PC-9 (cell line): ENCODE measurements at regions of chr11 and their contacts with region 1.

Region 1: DNA sequence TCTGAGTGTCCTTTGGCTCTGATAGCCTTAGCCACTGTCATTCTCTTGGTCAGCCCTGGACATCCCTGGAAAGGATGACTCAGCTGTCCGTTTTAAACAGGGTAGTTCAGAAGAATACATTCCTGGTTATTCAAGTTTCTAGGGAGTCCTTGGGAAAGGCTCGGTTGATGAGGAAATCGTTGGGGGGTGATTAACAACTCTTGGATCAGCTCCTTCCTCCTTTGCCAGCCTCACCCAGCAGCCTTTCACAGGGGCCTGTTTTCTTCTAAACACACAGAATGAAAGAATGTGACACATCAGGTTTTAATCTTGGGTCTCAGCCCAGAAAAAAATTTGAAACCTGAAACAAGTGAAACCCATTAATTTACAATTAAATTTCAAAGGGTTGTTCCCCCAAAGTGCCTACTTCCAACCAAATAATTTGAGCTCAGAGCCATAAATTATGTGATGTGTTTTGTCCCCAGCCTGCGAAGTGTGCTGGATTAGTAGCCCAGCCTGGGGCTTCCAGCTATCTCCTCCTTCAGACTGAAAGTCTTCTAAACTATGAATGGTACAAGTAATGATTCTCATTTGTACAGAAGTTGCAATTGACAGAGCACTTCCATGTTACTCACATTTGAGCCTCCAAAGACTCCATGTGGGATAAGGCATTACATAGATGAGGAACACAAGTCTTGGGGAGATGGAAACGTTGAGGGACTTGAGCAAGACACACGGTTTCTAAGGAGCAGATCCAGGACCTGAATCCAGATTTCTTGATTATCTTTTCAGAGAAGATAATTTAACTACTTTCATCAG is 19.3 kb upstream of the MRGPRX2 start:
- DNase-seq: peak; percentile 86 to 100
- H3K4me3 ChIP-seq: peak overlapping the region; percentile 41
- H3K27ac ChIP-seq: peak overlapping the region; percentile 100
- H3K4me1 ChIP-seq: peaks cover 53% of the 10 kb centered on the region
- H3K27me3 ChIP-seq: no peaks in the 10 kb centered on the region
- CTCF ChIP-seq: 0 out of 2 replicates have a peak, but pooled peaks have one; percentile 27

Region 2: DNA sequence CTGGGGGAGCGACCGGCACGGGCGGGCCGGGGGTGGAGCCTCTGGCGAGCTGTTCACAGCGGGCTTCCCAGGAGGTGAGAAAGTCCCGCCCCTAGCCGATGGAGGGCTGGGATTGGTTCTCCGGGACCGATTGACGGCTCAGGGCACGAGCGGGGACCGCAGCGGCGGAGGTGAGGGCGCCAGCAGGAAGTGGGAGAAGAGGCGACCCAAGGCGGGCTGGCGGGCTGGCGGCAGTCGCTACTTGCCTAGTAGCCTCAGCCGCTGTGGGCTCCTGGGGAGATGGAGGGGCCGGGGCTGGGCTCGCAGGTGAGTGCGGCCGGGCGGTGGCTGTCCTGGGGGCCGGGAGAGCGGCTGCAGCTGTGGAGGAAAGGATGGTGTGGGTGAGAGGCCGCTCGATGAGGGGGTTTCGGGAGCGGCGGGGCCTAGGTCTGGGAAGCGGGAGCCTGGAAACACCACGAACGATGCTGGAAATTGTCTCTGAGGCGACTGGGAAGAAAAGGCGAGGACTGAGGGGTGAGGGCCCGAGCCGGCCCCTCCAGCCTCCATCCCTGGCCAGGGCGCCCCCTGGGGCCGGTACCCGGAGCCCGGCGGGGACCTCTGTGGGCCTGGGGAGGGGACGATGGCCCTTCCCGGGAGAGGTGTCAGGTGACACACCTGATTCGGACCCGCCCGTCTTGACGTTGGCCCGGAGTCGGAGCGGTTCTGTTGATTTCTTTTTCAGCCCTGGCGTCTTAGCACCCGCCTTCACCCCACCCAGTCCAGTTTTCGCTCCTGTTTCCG is 37.3 kb after region 1 on chr11 and contains the start of gene ZDHHC13:
- CTCF ChIA-PET with region 1: interaction called, 5 read pairs
- POLR2A ChIA-PET with region 1: interaction called, 4 read pairs
- intact Hi-C with region 1: loop called (anchors 1 kb)
- DNase-seq: peak; percentile 91 to 99
- H3K4me3 ChIP-seq: peak within 1 kb of the TSS; percentile 87
- H3K27ac ChIP-seq: peak within 1 kb of the TSS; percentile 86
- H3K4me1 ChIP-seq: peaks cover 37% of the 10 kb centered on the region
- H3K27me3 ChIP-seq: no peaks in the 10 kb centered on the region
- CTCF ChIP-seq: peak; percentile 67; the same call in 1 of the 2 replicates
- total RNA-seq, gene ZDHHC13: 31.5 and 35.5 TPM in 2 replicates

Region 3: DNA sequence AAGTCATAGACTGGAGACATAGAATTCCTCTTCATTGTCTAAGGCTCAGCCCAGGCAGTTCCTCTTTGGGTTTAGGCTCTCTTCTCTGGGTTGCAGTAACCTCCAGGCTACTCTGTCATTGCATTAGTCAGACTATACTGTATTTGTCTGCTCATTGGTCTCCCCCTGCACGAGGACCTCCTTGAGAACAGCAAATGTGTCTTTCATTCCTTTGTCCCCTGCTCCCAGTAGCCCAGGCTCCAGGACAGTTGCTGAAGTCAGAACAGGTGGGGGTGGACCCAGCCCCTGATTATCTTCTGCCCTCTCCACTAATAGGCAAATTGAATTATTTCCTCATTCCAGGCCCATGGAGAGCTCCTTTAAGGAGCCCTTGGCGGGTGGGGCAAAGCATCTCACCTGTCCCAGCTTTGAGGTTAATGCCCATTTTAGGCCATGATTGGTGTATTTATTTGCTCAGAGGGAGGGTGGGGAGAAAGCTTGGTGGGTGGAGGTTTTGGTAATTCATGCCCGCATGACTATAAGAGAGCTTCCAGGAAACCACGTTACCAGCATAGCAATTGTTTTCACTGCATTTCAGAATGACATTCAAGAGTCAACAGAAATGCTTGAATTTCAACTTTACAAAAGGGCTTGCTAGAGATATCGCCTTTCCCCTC is 673.7 kb after region 1 on chr11:
- CTCF ChIA-PET with region 1: no interaction called
- POLR2A ChIA-PET with region 1: interaction called, 4 read pairs
- intact Hi-C with region 1: loop called (anchors 1 kb)
- DNase-seq: peak; percentile 78 to 88
- H3K4me3 ChIP-seq: no peak overlapping the region
- H3K27ac ChIP-seq: peak overlapping the region; percentile 80
- H3K4me1 ChIP-seq: peaks cover 27% of the 10 kb centered on the region
- H3K27me3 ChIP-seq: no peaks in the 10 kb centered on the region
- CTCF ChIP-seq: no peak